ENCODE measurements at regions of chr6 and their contacts with region 1.

Region 1: DNA sequence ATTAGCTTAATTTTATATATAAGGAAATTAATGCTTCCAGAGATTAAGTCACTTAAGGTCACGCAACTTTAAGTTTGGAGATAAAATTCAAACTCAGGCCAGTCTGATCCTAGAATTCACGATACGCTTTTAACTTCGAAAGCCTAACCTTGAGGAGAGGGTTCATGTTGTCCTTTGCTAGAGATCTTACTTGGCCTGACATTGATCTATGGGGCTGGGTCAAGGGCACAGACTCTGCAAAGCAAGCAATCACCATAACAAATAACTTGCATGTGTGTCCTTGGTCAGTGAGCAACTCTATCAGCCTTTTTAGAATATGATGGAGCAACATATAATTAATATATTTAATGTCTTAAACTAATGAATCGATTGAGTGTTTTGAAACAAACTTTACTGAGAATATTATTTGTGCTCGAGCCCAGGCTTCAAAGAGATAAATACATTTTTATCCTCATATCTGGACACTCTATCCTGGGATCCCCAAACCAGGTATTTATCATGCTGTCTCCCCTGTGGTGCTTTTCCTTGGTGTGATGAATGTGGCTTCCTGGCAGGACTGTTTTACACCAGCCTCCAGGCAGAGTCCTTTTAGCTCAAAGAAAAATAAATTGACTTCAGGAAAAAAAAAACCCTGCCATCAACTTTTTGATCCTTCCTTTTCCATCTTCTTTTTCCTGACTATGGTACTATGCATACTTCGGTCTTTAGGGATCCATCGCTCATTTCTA is 29.1 kb downstream of the RPS12 start:
- DNase-seq: no peak
- H3K4me3 ChIP-seq: no peak overlapping the region
- H3K4me3 Mint-ChIP-seq: no peak overlapping the region
- H3K27ac ChIP-seq: no peak overlapping the region
- H3K27ac Mint-ChIP-seq: no peak overlapping the region
- H3K4me1 ChIP-seq: no peaks in the 10 kb centered on the region
- H3K4me1 Mint-ChIP-seq: no peaks in the 10 kb centered on the region
- H3K27me3 ChIP-seq: no peaks in the 10 kb centered on the region
- H3K27me3 Mint-ChIP-seq: peaks cover 2 to 5% of the 10 kb centered on the region in 2 donors

Region 2: DNA sequence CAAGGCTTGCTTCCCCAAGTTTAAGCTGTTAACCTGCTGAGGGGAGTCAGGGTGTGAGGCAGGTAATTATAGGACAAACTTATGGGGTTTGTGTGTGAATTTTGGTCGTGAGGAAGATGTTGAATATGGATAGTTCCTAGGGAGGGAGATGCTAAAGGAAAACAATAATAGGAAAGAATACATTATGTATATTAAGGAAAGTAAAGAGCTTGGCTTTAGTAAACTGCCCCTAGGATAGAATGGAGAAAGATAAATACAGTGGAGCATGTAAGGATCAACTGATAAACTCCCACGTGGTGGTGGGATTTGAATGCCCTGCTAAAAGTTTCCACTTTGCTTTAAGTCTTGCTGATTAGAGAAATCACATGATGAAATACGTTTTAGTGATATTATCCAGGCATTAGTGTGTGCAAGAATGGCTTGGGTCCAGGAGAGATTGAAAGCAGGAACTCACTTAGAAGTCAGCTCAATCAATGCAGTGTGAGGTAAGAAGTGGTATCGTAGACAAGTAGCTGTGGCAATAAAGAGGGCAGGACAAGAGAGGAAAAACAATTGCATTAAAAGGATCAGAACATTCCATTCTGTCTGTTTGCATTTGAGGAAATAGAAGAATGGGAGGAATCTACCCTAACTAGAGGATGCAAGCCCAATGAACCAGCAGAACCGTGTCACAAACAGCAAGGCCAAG is 23.4 kb after region 1 on chr6:
- CTCF ChIA-PET with region 1: no interaction called
- POLR2A ChIA-PET with region 1: no interaction called
- intact Hi-C with region 1: loop called (anchors 2 kb)
- DNase-seq: no peak
- H3K4me3 ChIP-seq: no peak overlapping the region
- H3K4me3 Mint-ChIP-seq: no peak overlapping the region
- H3K27ac ChIP-seq: no peak overlapping the region
- H3K27ac Mint-ChIP-seq: no peak overlapping the region
- H3K4me1 ChIP-seq: no peaks in the 10 kb centered on the region
- H3K4me1 Mint-ChIP-seq: no peaks in the 10 kb centered on the region
- H3K27me3 ChIP-seq: no peaks in the 10 kb centered on the region
- H3K27me3 Mint-ChIP-seq: peaks cover 1% of the 10 kb centered on the region in 2 donors